AG04450 (cell line): ENCODE measurements at regions of chr6 and their contacts with region 1.

Region 1: DNA sequence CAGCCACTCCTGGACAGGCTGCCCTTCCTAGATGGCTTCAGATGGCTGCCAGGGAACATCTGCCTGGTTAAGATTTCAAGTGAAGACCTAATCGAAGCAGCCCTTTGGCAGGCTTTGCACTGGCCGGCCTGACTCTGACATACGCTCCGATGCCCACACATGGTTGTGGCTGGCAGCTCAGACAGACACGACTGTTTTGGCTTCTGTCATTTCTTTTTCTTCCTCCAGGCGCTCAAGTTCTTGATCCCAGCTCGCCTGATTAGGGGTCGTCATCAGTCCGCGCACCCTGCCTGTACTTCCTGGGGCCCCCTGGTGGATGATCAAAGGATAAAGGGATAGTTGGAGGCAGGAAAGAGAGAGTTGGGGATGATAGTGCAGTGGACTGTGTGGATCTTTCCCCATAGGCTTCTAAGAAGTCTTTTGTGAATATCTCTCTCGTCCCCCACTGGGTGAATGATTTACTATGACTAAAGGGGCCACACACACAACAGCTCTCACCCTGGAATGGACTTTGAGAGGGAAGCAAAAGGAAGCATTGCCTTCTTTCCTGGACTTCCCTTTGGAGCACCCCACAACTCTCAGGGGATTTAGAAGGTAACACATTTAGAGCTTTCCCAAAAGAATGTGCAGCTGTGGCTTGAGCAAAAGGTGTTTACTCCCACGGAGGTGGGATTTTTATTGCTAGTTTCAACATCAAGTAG is 21.4 kb upstream of the TRAM2 start:
- DNase-seq: no peak
- H3K4me3 ChIP-seq: no peak overlapping the region
- H3K27ac ChIP-seq: no peak overlapping the region
- H3K27me3 ChIP-seq: no peaks in the 10 kb centered on the region
- CTCF ChIP-seq: peak; percentile 86

Region 2: DNA sequence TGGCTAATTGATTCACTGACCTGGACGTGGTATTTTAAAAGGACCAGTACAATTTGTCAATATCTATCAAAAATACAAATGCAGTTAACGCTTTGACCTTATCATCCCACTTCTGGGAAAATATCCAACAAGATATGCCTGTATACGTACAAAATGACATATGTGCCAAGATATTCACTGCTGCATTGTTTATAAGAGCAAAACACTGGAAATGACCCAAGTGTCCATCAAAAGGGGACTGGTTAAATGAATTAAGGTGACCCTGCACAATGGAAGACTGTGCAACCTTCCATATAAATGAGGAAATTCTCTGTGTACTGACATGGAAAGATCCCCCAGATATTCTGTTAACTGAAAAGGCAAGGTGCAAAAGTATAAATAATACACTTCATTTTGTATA is 35.4 kb before region 1 on chr6:
- CTCF ChIA-PET with region 1: interaction called, 14 read pairs
- POLR2A ChIA-PET with region 1: no interaction called
- DNase-seq: no peak
- H3K4me3 ChIP-seq: no peak overlapping the region
- H3K27ac ChIP-seq: no peak overlapping the region
- H3K27me3 ChIP-seq: no peaks in the 10 kb centered on the region
- CTCF ChIP-seq: no peak

Region 3: DNA sequence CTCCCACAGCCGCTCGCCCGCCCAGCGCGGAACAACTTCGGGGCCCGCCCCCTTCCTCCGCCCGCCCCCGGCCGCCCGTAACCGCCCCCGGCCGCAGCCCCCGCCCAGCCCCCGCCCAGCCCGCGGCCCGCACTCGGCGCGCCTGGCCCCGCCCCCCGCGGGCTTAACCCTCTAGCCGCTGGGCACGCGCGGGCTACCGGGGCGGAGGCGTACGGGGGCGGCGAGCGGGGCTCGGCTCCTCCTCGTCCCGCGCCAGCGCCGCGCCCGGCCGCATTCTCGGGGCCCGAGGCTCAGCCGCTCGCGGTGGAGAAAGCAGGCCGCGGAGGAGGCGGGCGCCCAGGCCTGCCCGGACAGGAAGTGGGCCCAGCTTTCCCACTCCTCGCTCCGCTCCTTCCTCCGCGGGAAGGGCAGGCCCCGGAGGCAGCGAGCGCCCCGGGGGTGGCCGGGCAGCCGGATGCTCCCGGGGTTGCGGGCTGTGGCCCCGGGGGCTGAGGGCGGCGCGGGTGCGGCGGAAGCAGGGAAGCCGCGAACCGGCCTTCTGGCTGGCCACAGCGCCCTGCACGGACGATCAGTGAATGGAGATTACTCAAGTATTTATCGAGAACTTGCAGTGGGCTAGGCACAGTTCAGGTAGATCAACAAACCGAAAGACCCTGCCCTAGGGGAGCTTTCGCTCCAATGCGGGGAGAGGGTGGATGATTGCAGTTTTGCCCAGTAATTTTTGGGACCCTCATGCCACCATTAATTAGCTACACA is 21.1 kb before region 1 on chr6 and contains the start of gene TRAM2:
- CTCF ChIA-PET with region 1: interaction called, 31 read pairs
- POLR2A ChIA-PET with region 1: interaction called, 27 read pairs
- DNase-seq: no peak
- H3K4me3 ChIP-seq: peak within 1 kb of the TSS; percentile 94
- H3K27ac ChIP-seq: peak within 1 kb of the TSS; percentile 89
- H3K27me3 ChIP-seq: no peaks in the 10 kb centered on the region
- CTCF ChIP-seq: no peak
- polyA plus RNA-seq, gene TRAM2: 134 and 152 TPM in 2 replicates

Region 4: GRCh38 chr6:52664186-52664990 is 66.1 kb after region 1 on chr6:
- CTCF ChIA-PET with region 1: interaction called, 31 read pairs
- POLR2A ChIA-PET with region 1: interaction called, 5 read pairs
- DNase-seq: peak; percentile 88
- H3K4me3 ChIP-seq: peak overlapping the region; percentile 76
- H3K27ac ChIP-seq: no peak overlapping the region
- H3K27me3 ChIP-seq: no peaks in the 10 kb centered on the region
- CTCF ChIP-seq: no peak

Region 5: GRCh38 chr6:52697903-52698302 is 99.6 kb after region 1 on chr6:
- CTCF ChIA-PET with region 1: no interaction called
- POLR2A ChIA-PET with region 1: no interaction called
- DNase-seq: no peak
- H3K4me3 ChIP-seq: no peak overlapping the region
- H3K27ac ChIP-seq: no peak overlapping the region
- H3K27me3 ChIP-seq: no peaks in the 10 kb centered on the region
- CTCF ChIP-seq: 0 out of 2 replicates have a peak, but pooled peaks have one; percentile 8

Region 6: DNA sequence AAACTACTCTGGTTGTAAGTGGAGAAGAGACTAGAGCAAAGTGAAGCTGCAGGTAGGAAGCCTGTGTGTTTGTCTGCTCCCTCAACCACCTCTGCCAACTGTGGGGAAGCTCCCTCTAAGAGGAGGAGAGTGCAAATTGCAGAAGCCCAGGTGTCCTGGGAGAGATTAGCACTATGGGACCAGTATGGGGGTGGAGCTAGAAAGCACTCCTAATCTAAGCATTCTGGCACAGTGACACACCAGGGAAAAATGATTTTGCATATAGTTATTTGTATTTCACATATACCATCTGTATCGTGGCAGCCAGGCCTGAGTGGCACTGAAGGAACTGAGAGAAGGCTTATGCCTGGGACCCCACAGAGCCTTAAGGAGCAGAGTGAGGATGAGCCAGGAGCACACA is 192.6 kb after region 1 on chr6:
- CTCF ChIA-PET with region 1: no interaction called
- POLR2A ChIA-PET with region 1: no interaction called
- DNase-seq: no peak
- H3K4me3 ChIP-seq: no peak overlapping the region
- H3K27ac ChIP-seq: no peak overlapping the region
- H3K27me3 ChIP-seq: no peaks in the 10 kb centered on the region
- CTCF ChIP-seq: no peak

Region 7: GRCh38 chr6:54071821-54072340 is 1473.6 kb after region 1 on chr6:
- CTCF ChIA-PET with region 1: no interaction called
- POLR2A ChIA-PET with region 1: no interaction called
- DNase-seq: no peak
- H3K4me3 ChIP-seq: no peak overlapping the region
- H3K27ac ChIP-seq: no peak overlapping the region
- H3K27me3 ChIP-seq: no peaks in the 10 kb centered on the region
- CTCF ChIP-seq: no peak